HepG2 (cell line): ENCODE measurements at regions of chr1 and their contacts with region 1.

Region 1: GRCh38 chr1:31372961-31373896 is at the start of gene FABP3:
- DNase-seq: peak; percentile 71
- ATAC-seq: peak; percentile 87
- H3K4me3 ChIP-seq: peak within 1 kb of the TSS; percentile 36 to 64 (median 50); a peak in 5 of 6 replicates
- H3K27ac ChIP-seq: peak within 1 kb of the TSS; percentile 40
- H3K4me1 ChIP-seq: peaks cover 77% of the 10 kb centered on the region
- H3K27me3 ChIP-seq: no peaks in the 10 kb centered on the region
- CTCF ChIP-seq: peak; percentile 43
- EP300 ChIP-seq: 0 out of 4 replicates have a peak, but pooled peaks of 1 of the 2 experiments have one; percentile 20
- POLR2A ChIP-seq: peak in 1 of 2 experiments; percentile 65; a peak in 2 of 4 replicates
- RAD21 ChIP-seq: no peak
- total RNA-seq, gene FABP3: 0.24 and 0.46 TPM in 2 replicates

Region 2: GRCh38 chr1:31027693-31028526 is 345.3 kb before region 1 on chr1:
- CTCF ChIA-PET with region 1: no interaction called
- POLR2A ChIA-PET with region 1: no interaction called
- in situ Hi-C with region 1: no loop called
- intact Hi-C with region 1: no loop called
- DNase-seq: no peak
- ATAC-seq: no peak
- H3K4me3 ChIP-seq: no peak overlapping the region
- H3K27ac ChIP-seq: no peak overlapping the region
- H3K4me1 ChIP-seq: peaks cover 89% of the 10 kb centered on the region
- H3K27me3 ChIP-seq: no peaks in the 10 kb centered on the region
- CTCF ChIP-seq: no peak
- EP300 ChIP-seq: no peak
- POLR2A ChIP-seq: no peak
- RAD21 ChIP-seq: no peak

Region 3: DNA sequence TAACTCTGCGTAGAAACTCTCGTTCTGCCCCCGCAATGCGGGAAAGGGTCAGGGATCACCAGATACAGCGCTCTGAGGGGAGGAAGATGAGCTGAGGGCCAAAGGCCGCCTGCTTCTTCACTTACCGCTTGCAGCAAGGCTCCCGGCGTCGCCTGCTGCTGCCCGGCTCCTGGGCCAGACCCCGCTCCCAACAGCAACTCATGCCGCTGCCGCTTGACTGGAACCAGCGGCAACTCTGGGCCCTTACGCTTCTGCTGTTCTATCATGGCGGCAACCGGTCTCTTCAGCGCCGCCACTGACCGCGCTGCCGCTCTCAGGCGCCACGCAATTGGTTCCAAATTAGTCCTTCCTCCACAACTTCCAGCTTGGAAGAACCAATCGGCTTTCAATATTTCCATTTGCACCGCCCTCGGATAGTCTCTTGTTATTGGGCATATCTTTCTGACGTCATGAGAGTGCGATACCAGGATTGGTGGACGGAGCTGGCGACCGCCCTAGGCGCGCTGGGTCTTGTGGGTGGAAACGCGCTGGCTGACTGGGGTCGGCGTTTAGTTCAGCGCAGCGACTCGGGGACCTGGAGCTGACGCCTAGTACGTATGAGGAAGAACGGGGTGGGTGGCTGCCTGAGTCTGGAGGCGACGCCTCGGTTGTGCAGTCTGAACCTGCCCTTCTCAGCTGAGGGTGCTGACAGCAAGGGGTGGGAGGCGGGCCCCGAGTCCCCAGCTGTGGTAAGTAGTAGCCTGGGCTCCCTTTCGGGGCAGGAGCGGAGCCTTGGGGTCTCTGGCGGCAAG is 76.5 kb before region 1 on chr1 and contains the starts of genes SNRNP40 and ZCCHC17:
- CTCF ChIA-PET with region 1: no interaction called
- POLR2A ChIA-PET with region 1: interaction called, 15 read pairs
- in situ Hi-C with region 1: no loop called
- intact Hi-C with region 1: no loop called
- DNase-seq: peak; percentile 100
- ATAC-seq: peak; percentile 97
- H3K4me3 ChIP-seq: peak within 1 kb of the TSS; percentile 84 to 95 (median 93)
- H3K27ac ChIP-seq: peak within 1 kb of the TSS; percentile 82
- H3K4me1 ChIP-seq: peaks cover 44% of the 10 kb centered on the region
- H3K27me3 ChIP-seq: no peaks in the 10 kb centered on the region; a peak in 1 of 5 replicates
- CTCF ChIP-seq: peak; percentile 51
- EP300 ChIP-seq: no peak
- POLR2A ChIP-seq: peak; percentile 92 to 94
- RAD21 ChIP-seq: peak; percentile 35; the same call in 1 of the 2 replicates
- total RNA-seq, gene SNRNP40: 147 and 192 TPM in 2 replicates
- total RNA-seq, gene ZCCHC17: 53.0 and 81.2 TPM in 2 replicates

Region 4: GRCh38 chr1:31434171-31434871 is 61.1 kb after region 1 on chr1:
- CTCF ChIA-PET with region 1: no interaction called
- POLR2A ChIA-PET with region 1: no interaction called
- in situ Hi-C with region 1: no loop called
- intact Hi-C with region 1: no loop called
- DNase-seq: peak; percentile 83
- ATAC-seq: peak; percentile 77
- H3K4me3 ChIP-seq: no peak overlapping the region
- H3K27ac ChIP-seq: peak overlapping the region; percentile 76
- H3K4me1 ChIP-seq: peaks cover 90% of the 10 kb centered on the region
- H3K27me3 ChIP-seq: no peaks in the 10 kb centered on the region
- CTCF ChIP-seq: peak; percentile 55
- EP300 ChIP-seq: peak in 1 of 2 experiments; percentile 88; a peak in 2 of 4 replicates
- POLR2A ChIP-seq: peak in 1 of 2 experiments; percentile 44; a peak in 1 of 4 replicates
- RAD21 ChIP-seq: no peak